ENCODE measurements at regions of chr1 and their contacts with region 1.

Region 1: DNA sequence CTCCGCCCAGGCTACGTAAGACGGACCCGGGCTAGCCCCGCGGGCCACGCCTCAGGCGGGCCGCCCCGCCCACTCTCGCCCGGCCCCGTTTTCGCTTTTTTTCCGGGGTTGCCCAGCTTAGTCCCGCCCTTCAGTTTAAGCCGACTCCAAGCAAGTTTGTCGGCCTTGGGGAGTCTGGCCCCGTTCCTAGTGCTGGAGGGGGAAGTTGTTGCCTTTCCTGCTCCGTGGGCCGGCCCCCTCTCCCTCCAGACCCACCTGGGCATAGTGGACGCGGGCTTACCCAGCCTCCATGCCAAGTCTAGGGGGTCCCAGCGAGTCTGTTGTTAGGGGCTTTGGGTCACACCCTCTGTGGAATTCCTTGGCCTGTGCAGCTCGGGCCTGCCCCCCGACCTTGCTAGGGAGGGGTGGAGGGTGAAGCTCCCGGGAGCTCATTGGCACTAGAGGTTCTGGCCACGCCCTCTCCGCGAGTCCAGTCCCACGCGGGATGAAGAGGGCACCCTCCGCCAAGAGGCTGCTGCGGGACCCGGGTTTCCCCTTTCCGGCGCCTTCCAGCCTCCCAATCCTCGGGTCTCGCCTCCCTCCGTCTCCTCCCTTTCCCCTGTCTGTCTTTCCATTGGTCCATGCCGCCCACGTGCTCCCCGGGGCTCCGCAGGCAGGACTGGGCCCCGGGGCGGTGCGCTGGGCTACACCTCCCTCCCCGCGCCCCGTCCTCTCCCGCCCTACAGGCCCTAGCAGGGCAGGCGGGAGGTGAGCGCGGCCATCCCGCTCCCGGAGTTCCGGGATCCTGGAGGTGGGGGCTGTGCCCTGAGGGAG is 3.3 kb downstream of the RUSC1 start:
- DNase-seq: peak; percentile 81
- H3K4me3 ChIP-seq: peak overlapping the region; percentile 66
- H3K27me3 ChIP-seq: no peaks in the 10 kb centered on the region
- CTCF ChIP-seq: no peak

Region 2: DNA sequence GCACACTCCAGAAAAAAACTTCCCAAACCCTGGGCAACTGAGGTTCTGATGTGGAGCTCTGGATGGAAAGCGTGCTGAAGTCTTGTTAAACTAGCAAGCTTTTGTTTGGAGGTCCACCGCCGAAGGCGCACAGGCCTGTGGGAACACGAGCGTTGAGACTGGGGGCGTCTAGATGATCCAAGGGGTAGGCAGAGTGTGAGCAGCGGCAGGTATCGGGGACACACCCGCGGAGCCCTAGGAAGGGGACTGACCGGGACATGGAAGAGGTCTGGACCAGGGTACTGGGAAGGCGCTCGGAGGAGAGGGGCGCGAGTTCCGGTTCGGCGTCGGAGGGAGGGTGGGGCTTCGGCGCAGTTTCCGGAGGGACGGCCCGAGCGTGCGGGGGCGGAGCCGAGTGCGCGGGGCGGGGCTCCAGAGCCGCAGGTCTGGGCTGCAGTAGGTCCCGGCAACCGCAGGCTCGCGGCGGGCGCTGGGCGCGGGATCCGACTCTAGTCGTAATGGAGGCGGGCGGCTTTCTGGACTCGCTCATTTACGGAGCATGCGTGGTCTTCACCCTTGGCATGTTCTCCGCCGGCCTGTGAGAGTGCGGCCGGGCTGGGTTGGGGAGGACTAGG is 188.5 kb before region 1 on chr1 and contains the start of gene SLC50A1:
- CTCF ChIA-PET with region 1: no interaction called
- POLR2A ChIA-PET with region 1: no interaction called
- DNase-seq: peak; percentile 73
- H3K4me3 ChIP-seq: peak within 1 kb of the TSS; percentile 82
- H3K27me3 ChIP-seq: no peaks in the 10 kb centered on the region
- CTCF ChIP-seq: no peak
- polyA plus RNA-seq, gene SLC50A1: 39.5 and 47.4 TPM in 2 replicates

Region 3: DNA sequence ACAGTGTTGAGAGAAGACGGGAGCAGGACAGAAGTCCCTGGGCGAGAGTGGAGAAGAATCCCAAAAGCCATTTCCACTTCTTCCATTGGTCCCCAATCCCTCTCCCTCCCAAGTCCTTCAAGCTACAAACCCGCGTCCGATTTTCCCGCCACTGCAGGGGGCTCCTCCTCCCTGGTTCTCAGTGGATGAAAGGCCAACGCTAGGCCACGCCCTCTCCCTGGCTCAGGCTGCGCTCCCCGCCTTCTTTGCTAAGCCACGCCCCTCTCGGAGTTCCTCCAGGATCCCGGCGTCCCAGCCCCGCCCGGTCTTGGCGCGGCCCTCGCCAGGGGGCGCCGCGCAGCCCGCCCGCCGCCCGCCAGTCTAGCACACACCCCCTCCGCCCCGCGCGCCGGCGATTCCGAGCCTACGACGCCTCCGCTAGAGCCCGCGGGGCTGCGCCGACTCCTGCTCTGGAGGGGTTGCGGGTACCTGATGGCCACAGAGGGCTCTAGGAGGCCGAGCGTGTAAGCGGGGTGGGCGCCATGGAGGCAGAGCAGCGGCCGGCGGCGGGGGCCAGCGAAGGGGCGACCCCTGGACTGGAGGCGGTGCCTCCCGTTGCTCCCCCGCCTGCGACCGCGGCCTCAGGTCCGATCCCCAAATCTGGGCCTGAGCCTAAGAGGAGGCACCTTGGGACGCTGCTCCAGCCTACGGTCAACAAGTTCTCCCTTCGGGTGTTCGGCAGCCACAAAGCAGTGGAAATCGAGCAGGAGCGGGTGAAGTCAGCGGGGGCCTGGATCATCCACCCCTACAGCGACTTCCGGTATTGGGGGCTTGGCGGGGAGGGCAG is 46.7 kb before region 1 on chr1 and contains the start of gene HCN3:
- CTCF ChIA-PET with region 1: interaction called, 12 read pairs
- POLR2A ChIA-PET with region 1: no interaction called
- DNase-seq: peak; percentile 60
- H3K4me3 ChIP-seq: peak within 1 kb of the TSS; percentile 86
- H3K27me3 ChIP-seq: no peaks in the 10 kb centered on the region
- CTCF ChIP-seq: peak; percentile 42
- polyA plus RNA-seq, gene HCN3: 1.8 and 4.0 TPM in 2 replicates

Region 4: GRCh38 chr1:155308493-155309422 is 15.2 kb before region 1 on chr1 and contains the start of gene FDPS:
- CTCF ChIA-PET with region 1: interaction called, 16 read pairs
- POLR2A ChIA-PET with region 1: no interaction called
- DNase-seq: peak; percentile 96
- H3K4me3 ChIP-seq: peak within 1 kb of the TSS; percentile 86
- H3K27me3 ChIP-seq: no peaks in the 10 kb centered on the region
- CTCF ChIP-seq: no peak
- polyA plus RNA-seq, gene FDPS: 126 and 131 TPM in 2 replicates

Measured in BJ (cell line).